ENCODE measurements at regions of chr14 and their contacts with region 1.

Region 1: DNA sequence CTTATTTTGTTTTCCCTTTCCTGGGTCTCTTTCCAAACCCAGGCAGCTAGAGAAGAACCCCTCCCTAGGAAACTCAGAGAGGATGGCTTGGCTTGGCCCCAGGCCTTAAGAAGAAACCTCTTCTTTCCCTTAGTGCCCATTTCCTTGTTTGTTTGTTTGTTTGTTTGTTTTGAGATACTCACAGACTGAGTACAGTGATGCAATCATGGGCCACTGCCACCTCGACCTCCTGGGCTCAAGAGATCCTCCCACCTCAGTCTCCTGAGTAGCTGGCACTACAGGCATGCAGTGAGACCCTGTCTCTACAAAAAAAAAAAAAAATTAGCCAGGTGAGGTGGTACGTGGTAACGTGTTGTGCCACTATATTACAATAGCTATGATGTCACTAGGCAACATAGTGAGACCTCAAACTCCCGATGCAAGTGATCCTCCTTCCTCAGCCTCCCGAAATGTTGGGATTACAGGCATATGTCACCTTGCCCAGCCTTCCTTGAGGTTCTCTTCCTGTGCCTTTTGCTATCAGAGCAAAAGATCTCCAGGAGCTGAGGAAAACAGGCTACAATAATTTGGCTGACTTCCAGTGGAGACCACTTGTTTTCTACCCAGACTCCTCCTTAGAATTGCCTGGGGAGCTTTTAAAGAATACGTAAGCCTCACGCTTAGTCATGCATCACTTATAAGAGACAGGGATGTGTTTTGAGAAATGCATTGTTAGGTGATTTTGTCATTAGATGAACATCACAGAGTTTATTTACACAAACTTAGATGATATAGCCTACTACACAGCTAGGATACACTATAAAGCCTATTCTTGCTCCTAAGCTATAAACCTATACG is 34.5 kb upstream of the LGALS3 start:
- H3K4me3 ChIP-seq: no peak overlapping the region
- H3K27ac ChIP-seq: no peak overlapping the region
- H3K4me1 ChIP-seq: no peaks in the 10 kb centered on the region; the same call in 1 of the 2 replicates
- CTCF ChIP-seq: no peak

Region 2: GRCh38 chr14:53630336-53630735 is 1464.2 kb before region 1 on chr14:
- CTCF ChIA-PET with region 1: no interaction called
- POLR2A ChIA-PET with region 1: no interaction called
- H3K4me3 ChIP-seq: no peak overlapping the region
- H3K27ac ChIP-seq: no peak overlapping the region
- H3K4me1 ChIP-seq: no peaks in the 10 kb centered on the region
- CTCF ChIP-seq: no peak

Region 3: DNA sequence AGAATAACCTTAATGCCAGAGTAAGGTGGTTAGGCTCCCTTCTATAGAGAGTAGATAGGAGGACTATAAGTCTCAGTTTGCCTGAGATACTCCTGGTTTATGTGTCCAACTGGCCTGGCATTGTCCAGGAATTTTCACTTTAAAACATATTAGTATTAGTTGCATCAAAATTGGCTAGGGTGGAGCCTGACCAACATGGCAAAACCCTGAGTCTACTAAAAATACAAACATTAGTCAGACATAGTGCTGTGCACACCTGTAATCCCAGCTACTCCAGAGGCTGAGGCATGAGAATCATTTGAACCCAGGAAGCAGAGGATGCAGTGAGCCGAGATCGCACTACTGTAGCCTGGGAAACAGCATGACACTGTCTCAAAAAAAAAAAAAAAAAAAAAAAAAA is 79.5 kb before region 1 on chr14:
- CTCF ChIA-PET with region 1: no interaction called
- POLR2A ChIA-PET with region 1: no interaction called
- H3K4me3 ChIP-seq: no peak overlapping the region
- H3K27ac ChIP-seq: no peak overlapping the region
- H3K4me1 ChIP-seq: no peaks in the 10 kb centered on the region
- CTCF ChIP-seq: no peak

Region 4: DNA sequence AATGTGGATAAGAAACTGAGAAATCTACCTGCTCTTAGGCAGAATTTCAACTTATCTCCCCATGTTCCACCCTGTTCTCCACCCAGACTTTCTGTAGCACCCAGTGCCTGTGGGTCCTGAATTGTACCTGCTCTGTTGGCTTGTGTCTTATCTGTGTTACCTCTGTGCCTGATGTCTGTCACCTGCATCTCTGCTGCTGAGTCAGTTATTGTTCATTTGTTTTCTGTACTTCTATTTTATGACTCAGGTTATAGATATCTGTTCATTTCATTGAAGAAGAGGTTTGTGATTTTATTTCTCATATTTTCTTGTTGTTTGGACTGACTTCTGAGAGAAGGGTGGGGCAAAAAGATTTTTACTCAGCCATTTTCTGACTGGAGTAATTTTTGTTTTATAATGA is 55.8 kb before region 1 on chr14:
- CTCF ChIA-PET with region 1: no interaction called
- POLR2A ChIA-PET with region 1: no interaction called
- H3K4me3 ChIP-seq: no peak overlapping the region
- H3K27ac ChIP-seq: no peak overlapping the region
- H3K4me1 ChIP-seq: no peaks in the 10 kb centered on the region
- CTCF ChIP-seq: no peak

Region 5: GRCh38 chr14:55136885-55137786 is 42.6 kb after region 1 on chr14:
- CTCF ChIA-PET with region 1: interaction called, 14 read pairs
- POLR2A ChIA-PET with region 1: interaction called, 7 read pairs
- H3K4me3 ChIP-seq: no peak overlapping the region
- H3K27ac ChIP-seq: no peak overlapping the region
- H3K4me1 ChIP-seq: no peaks in the 10 kb centered on the region
- CTCF ChIP-seq: no peak

Measured in HEK293 (cell line).